GM10248 (cell line): ENCODE measurements at regions of chr1 and their contacts with region 1.

Region 1: GRCh38 chr1:183291802-183292514 is 105.9 kb downstream of the LAMC2 start:
- DNase-seq: no peak
- CTCF ChIP-seq: no peak

Region 2: GRCh38 chr1:183306317-183307042 is 14.5 kb after region 1 on chr1:
- CTCF ChIA-PET with region 1: interaction called, 11 read pairs
- POLR2A ChIA-PET with region 1: no interaction called
- DNase-seq: no peak
- CTCF ChIP-seq: peak; percentile 22